ENCODE measurements at regions of chr3 and their contacts with region 1.

Region 1: GRCh38 chr3:58177747-58178527 is 32.8 kb downstream of the DNASE1L3 start:
- DNase-seq: peak; percentile 97
- ATAC-seq: peak; percentile 82
- H3K4me3 Mint-ChIP-seq: peak overlapping the region; percentile 85
- H3K27ac Mint-ChIP-seq: no peak overlapping the region
- H3K4me1 Mint-ChIP-seq: peaks cover 39% of the 10 kb centered on the region
- H3K27me3 Mint-ChIP-seq: peaks cover 15% of the 10 kb centered on the region
- CTCF ChIP-seq: peak; percentile 96

Region 2: GRCh38 chr3:57961828-57962447 is 216.0 kb before region 1 on chr3:
- CTCF ChIA-PET with region 1: interaction called, 10 read pairs
- POLR2A ChIA-PET with region 1: no interaction called
- DNase-seq: no peak
- ATAC-seq: peak; percentile 73
- H3K4me3 Mint-ChIP-seq: no peak overlapping the region
- H3K27ac Mint-ChIP-seq: no peak overlapping the region; the same call in 1 of the 2 replicates
- H3K4me1 Mint-ChIP-seq: peaks cover 6% of the 10 kb centered on the region
- H3K27me3 Mint-ChIP-seq: no peaks in the 10 kb centered on the region
- CTCF ChIP-seq: peak; percentile 15; the same call in 1 of the 2 replicates

Region 3: GRCh38 chr3:58020783-58021071 is 157.2 kb before region 1 on chr3:
- CTCF ChIA-PET with region 1: interaction called, 11 read pairs
- POLR2A ChIA-PET with region 1: no interaction called
- DNase-seq: no peak
- ATAC-seq: no peak
- H3K4me3 Mint-ChIP-seq: peak overlapping the region; percentile 42
- H3K27ac Mint-ChIP-seq: peak overlapping the region; percentile 99
- H3K4me1 Mint-ChIP-seq: peaks cover 84% of the 10 kb centered on the region
- H3K27me3 Mint-ChIP-seq: no peaks in the 10 kb centered on the region
- CTCF ChIP-seq: no peak

Region 4: GRCh38 chr3:58041654-58042324 is 136.1 kb before region 1 on chr3:
- CTCF ChIA-PET with region 1: no interaction called
- POLR2A ChIA-PET with region 1: no interaction called
- DNase-seq: no peak
- ATAC-seq: peak; percentile 61
- H3K4me3 Mint-ChIP-seq: peak overlapping the region; percentile 20; the same call in 1 of the 2 replicates
- H3K27ac Mint-ChIP-seq: peak overlapping the region; percentile 98
- H3K4me1 Mint-ChIP-seq: peaks cover 86% of the 10 kb centered on the region
- H3K27me3 Mint-ChIP-seq: no peaks in the 10 kb centered on the region
- CTCF ChIP-seq: no peak

Region 5: DNA sequence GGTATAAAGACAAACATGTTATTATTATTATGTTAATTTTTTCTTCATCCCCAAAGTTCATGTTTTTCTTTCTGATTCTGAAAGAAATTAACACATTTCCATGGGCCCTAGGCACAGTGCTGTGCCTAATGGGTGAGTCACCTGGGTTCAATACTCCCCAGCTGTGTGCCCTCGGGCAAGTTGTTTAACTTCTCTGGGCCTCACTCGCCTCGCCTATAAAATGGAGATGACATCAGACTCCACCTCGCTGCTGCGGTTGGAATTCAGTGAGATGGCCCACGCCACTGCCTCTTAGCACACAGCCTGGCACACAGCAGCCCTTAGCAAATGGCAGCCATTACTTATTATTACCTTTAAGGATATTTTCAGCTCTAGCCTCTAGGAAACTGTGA is 10.2 kb after region 1 on chr3:
- CTCF ChIA-PET with region 1: interaction called, 88 read pairs
- POLR2A ChIA-PET with region 1: no interaction called
- DNase-seq: no peak
- ATAC-seq: no peak
- H3K4me3 Mint-ChIP-seq: no peak overlapping the region
- H3K27ac Mint-ChIP-seq: no peak overlapping the region; the same call in 1 of the 2 replicates
- H3K4me1 Mint-ChIP-seq: peaks cover 16% of the 10 kb centered on the region
- H3K27me3 Mint-ChIP-seq: no peaks in the 10 kb centered on the region
- CTCF ChIP-seq: no peak

Region 6: GRCh38 chr3:58217209-58217811 is 39.4 kb after region 1 on chr3:
- CTCF ChIA-PET with region 1: interaction called, 10 read pairs
- POLR2A ChIA-PET with region 1: no interaction called
- DNase-seq: peak; percentile 78
- ATAC-seq: peak; percentile 91
- H3K4me3 Mint-ChIP-seq: peak overlapping the region; percentile 46
- H3K27ac Mint-ChIP-seq: peak overlapping the region; percentile 71; the same call in 1 of the 2 replicates
- H3K4me1 Mint-ChIP-seq: peaks cover 10% of the 10 kb centered on the region
- H3K27me3 Mint-ChIP-seq: no peaks in the 10 kb centered on the region
- CTCF ChIP-seq: peak; percentile 51; the same call in 1 of the 2 replicates

Region 7: GRCh38 chr3:58299839-58300516 is 122.0 kb after region 1 on chr3:
- CTCF ChIA-PET with region 1: interaction called, 31 read pairs
- POLR2A ChIA-PET with region 1: interaction called, 10 read pairs
- DNase-seq: no peak
- ATAC-seq: peak; percentile 65
- H3K4me3 Mint-ChIP-seq: no peak overlapping the region
- H3K27ac Mint-ChIP-seq: no peak overlapping the region
- H3K4me1 Mint-ChIP-seq: peaks cover 9% of the 10 kb centered on the region
- H3K27me3 Mint-ChIP-seq: peaks cover 14% of the 10 kb centered on the region
- CTCF ChIP-seq: peak; percentile 48; the same call in 1 of the 2 replicates

Region 8: DNA sequence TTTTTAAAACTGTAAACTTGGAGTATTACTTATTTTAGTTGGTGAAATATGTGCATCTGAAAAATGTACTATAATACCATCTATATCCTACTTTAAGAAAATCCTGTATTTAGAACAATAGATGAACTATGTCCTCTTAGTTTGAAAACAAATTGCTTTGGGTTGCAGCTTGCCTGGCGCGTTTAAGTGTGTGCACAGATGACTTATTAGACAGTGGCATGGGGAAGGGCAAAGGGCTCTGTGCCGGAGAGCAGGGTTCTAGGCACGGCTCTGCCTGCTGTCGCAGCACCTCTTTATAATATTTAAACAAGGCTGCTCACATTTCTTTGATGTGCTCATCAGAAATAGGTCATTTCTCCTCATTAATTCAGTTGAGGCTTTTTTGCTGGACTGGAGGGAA is 164.7 kb after region 1 on chr3:
- CTCF ChIA-PET with region 1: no interaction called
- POLR2A ChIA-PET with region 1: no interaction called
- DNase-seq: no peak
- ATAC-seq: no peak
- H3K4me3 Mint-ChIP-seq: no peak overlapping the region
- H3K27ac Mint-ChIP-seq: no peak overlapping the region
- H3K4me1 Mint-ChIP-seq: no peaks in the 10 kb centered on the region
- H3K27me3 Mint-ChIP-seq: no peaks in the 10 kb centered on the region
- CTCF ChIP-seq: no peak